GM12878 (cell line): ENCODE measurements at regions of chr2 and their contacts with region 1.

Region 1: DNA sequence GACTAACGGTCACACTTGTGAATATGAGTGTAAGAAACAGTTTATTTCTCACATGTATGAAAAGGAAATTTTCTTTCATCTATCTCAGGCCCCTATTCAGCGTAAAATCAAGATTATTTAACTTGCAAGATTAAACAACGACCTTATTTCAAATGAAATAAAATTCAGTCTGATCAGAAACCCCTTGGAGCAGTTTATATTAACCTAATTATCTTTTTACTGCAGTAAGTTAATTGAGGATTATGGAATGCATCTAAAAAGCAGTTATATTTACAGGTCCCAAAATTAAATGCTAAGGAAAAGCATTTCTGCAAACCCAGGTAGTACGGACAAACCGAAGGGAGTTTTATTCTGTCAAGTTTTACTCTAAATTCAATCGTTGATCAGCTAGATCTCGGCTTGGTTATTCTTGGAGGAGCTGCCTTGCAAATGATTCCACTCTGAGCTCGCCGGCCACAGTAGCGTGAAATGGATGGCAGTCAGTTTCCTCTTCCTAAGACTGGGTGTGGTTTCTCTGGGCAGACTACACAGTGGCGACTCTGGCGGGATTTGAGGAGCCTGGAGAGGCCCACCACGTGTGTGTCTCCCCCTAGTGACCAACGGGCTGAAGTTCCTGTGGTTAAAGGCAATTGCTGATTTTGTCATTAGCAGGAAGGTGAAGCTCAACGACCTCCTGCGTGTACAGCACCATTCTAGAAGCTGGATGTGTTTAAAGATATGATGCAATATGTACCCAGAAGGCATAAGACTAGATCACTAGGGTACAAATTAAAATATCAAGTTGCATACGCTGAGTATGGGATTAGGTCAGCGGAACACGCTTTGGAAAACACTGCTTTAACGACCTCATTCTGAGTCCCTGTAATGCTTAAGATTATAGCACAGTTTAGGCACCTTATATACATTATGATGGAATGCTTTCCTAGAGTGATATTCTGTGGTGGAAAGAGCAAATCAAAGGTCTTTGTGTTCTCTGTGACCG is 36.4 kb downstream of the PRKRA start:
- DNase-seq: peak; percentile 90
- ATAC-seq: peak; percentile 85
- H3K4me3 ChIP-seq: peak overlapping the region; percentile 78
- H3K27ac ChIP-seq: peak overlapping the region; percentile 97
- H3K4me1 ChIP-seq: peaks cover 6% of the 10 kb centered on the region
- H3K27me3 ChIP-seq: no peaks in the 10 kb centered on the region
- CTCF ChIP-seq: peak; percentile 95 to 97 (median 97); a peak in 5 of 6 replicates
- EP300 ChIP-seq: 0 out of 4 replicates have a peak, but pooled peaks of 1 of the 2 experiments have one; percentile 11
- POLR2A ChIP-seq: peak; percentile 76
- RAD21 ChIP-seq: peak; percentile 85

Region 2: DNA sequence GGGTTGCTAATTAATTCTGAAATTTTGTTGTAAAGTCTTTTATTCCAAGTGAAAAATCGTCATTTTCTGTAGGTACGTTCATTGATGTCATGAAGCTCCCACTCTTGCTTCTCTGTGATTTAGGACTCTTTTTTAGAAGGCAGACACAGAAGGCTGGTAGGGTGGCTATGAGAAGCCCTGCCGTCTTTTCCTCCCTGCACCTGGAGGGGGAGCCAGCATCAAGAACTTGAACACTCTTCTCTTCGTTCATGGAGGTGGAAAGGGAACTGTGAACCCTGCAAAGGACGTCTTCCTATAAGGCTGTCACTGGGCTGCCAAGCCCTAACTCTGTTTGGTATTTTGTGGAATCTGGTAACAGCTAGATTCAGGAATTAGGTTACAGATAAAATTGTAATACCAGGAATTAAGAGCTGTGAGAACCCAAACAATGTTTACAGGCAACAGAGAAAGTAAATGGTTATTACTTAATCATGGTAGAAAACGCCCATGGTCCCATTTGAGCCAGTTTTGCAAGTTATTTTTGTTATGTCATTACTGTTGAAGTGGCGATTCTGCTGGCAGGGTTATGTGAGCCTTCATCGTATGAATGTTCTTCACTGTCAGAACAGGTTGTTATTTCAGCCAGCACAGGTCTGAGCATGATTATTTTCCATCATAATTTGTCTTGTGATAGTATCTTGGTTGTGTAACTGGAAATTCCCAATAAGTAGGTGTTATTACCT is 108.0 kb before region 1 on chr2:
- CTCF ChIA-PET with region 1: interaction called, 73 read pairs
- POLR2A ChIA-PET with region 1: no interaction called
- RAD21 ChIA-PET with region 1: interaction called, 9 read pairs
- SMC1A ChIA-PET with region 1: interaction called, 18 read pairs
- in situ Hi-C with region 1: loop called (anchors 5 kb)
- intact Hi-C with region 1: loop called (anchors 1 kb)
- DNase-seq: peak; percentile 31
- ATAC-seq: peak; percentile 99
- H3K4me3 ChIP-seq: no peak overlapping the region
- H3K27ac ChIP-seq: no peak overlapping the region
- H3K4me1 ChIP-seq: no peaks in the 10 kb centered on the region
- H3K27me3 ChIP-seq: no peaks in the 10 kb centered on the region
- CTCF ChIP-seq: peak; percentile 74 to 87 (median 82)
- EP300 ChIP-seq: no peak
- POLR2A ChIP-seq: no peak
- RAD21 ChIP-seq: peak; percentile 81

Region 3: DNA sequence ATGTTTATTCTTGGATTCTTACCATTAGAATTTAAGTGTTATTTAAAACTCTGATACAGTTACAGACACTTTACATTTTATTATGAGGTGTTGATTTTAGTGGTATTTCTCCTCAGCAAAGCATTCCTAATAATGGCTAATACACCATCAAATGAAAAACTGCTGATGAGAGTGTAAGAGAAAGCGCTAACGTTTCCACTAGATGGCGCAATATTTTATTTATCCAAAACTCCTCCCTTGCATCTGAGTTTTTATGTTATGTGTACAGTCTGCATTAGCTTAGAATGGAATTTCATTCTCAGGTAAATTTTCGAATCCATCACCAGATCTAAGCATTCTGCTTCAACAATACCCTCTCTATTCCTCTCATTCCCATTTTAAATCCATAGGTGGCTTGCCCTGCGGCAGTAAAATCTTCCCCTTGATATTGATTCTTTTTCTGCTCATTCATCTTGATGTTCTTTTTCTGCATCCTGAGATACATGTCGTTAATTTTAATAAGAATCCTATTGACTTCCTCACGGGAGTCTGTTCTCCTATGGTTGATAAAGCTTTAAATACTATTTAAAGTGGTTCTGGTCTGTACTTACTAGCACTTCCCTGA is 17.5 kb before region 1 on chr2:
- CTCF ChIA-PET with region 1: interaction called, 702 read pairs
- POLR2A ChIA-PET with region 1: interaction called, 64 read pairs
- RAD21 ChIA-PET with region 1: interaction called, 162 read pairs
- SMC1A ChIA-PET with region 1: interaction called, 454 read pairs
- in situ Hi-C with region 1: no loop called
- intact Hi-C with region 1: loop called (anchors 1 kb)
- DNase-seq: no peak
- ATAC-seq: peak; percentile 96
- H3K4me3 ChIP-seq: no peak overlapping the region
- H3K27ac ChIP-seq: no peak overlapping the region
- H3K4me1 ChIP-seq: no peaks in the 10 kb centered on the region
- H3K27me3 ChIP-seq: no peaks in the 10 kb centered on the region
- CTCF ChIP-seq: peak; percentile 48 to 63 (median 54); a peak in 5 of 6 replicates
- EP300 ChIP-seq: no peak
- POLR2A ChIP-seq: no peak
- RAD21 ChIP-seq: peak; percentile 68

Region 4: DNA sequence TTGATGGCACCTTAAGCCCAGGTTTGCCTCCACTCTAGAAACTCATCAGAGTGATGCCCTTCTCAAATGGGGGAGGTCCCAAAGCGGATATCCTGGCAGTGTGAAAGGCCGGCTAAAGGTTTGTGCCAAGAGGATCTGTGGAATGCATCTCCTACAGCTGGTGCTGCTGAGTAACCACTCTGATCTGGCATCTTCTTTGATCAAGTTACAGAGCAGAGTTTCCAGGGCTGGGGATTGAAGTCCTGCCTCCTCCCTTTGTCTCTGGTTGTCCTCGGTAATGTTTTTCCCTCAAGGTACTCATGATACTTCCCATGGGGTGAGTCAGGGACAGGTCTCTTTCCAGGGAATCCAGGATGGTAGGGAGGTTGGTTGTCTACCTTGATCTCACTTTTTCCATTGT is 11.8 kb after region 1 on chr2:
- CTCF ChIA-PET with region 1: interaction called, 16 read pairs
- POLR2A ChIA-PET with region 1: interaction called, 4 read pairs
- RAD21 ChIA-PET with region 1: interaction called, 7 read pairs
- SMC1A ChIA-PET with region 1: interaction called, 10 read pairs
- in situ Hi-C with region 1: no loop called
- intact Hi-C with region 1: no loop called
- DNase-seq: no peak
- ATAC-seq: no peak
- H3K4me3 ChIP-seq: no peak overlapping the region
- H3K27ac ChIP-seq: no peak overlapping the region
- H3K4me1 ChIP-seq: no peaks in the 10 kb centered on the region
- H3K27me3 ChIP-seq: no peaks in the 10 kb centered on the region
- CTCF ChIP-seq: no peak
- EP300 ChIP-seq: no peak
- POLR2A ChIP-seq: no peak
- RAD21 ChIP-seq: no peak

Region 5: GRCh38 chr2:178450774-178451525 is 36.4 kb after region 1 on chr2 and contains the starts of genes PJVK and PRKRA:
- CTCF ChIA-PET with region 1: interaction called, 41 read pairs
- POLR2A ChIA-PET with region 1: interaction called, 21 read pairs
- RAD21 ChIA-PET with region 1: interaction called, 26 read pairs
- SMC1A ChIA-PET with region 1: interaction called, 24 read pairs
- in situ Hi-C with region 1: no loop called
- intact Hi-C with region 1: loop called (anchors 1 kb)
- DNase-seq: peak; percentile 81
- ATAC-seq: peak; percentile 91
- H3K4me3 ChIP-seq: peak within 1 kb of the TSS; percentile 94
- H3K27ac ChIP-seq: peak within 1 kb of the TSS; percentile 94
- H3K4me1 ChIP-seq: peaks cover 9% of the 10 kb centered on the region
- H3K27me3 ChIP-seq: no peaks in the 10 kb centered on the region
- CTCF ChIP-seq: no peak
- EP300 ChIP-seq: 0 out of 4 replicates have a peak, but pooled peaks of 1 of the 2 experiments have one; percentile 2
- POLR2A ChIP-seq: peak; percentile 95
- RAD21 ChIP-seq: no peak
- polyA plus RNA-seq, gene PJVK: 2.1 to 3.0 TPM
- polyA plus RNA-seq, gene PRKRA: 19.1 to 25.1 TPM

Region 6: GRCh38 chr2:178666458-178666857 is 251.9 kb after region 1 on chr2:
- CTCF ChIA-PET with region 1: no interaction called
- POLR2A ChIA-PET with region 1: no interaction called
- RAD21 ChIA-PET with region 1: no interaction called
- SMC1A ChIA-PET with region 1: no interaction called
- in situ Hi-C with region 1: no loop called
- intact Hi-C with region 1: no loop called
- DNase-seq: no peak
- ATAC-seq: no peak
- H3K4me3 ChIP-seq: no peak overlapping the region
- H3K27ac ChIP-seq: no peak overlapping the region
- H3K4me1 ChIP-seq: no peaks in the 10 kb centered on the region
- H3K27me3 ChIP-seq: no peaks in the 10 kb centered on the region
- CTCF ChIP-seq: no peak
- EP300 ChIP-seq: no peak
- POLR2A ChIP-seq: no peak
- RAD21 ChIP-seq: no peak